HEK293 (cell line): ENCODE measurements at regions of chr5 and their contacts with region 1.

Region 1: DNA sequence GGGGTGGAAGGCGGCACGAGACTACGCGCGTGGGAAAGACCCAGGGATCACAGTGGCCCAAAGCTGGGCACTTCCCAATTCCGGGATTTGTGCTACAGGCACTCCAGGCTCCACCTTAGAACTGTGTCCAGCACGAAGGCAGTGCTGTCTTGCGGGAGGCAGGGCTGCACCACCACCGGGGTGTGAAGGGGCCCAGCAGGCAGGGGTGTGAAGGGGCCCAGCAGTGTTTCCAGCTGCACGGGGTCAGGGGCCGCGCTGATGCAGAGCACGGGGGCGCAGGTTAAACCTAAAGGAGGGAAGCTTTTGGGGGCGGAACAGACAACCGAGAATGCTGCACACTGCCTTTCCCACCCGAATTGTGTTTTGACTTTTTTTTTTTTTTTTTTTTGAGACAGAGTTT is 1.1 kb upstream of the PDCD6 start:
- H3K4me3 ChIP-seq: no peak overlapping the region
- H3K27ac ChIP-seq: peak overlapping the region; percentile 77
- H3K4me1 ChIP-seq: no peaks in the 10 kb centered on the region
- CTCF ChIP-seq: no peak

Region 2: DNA sequence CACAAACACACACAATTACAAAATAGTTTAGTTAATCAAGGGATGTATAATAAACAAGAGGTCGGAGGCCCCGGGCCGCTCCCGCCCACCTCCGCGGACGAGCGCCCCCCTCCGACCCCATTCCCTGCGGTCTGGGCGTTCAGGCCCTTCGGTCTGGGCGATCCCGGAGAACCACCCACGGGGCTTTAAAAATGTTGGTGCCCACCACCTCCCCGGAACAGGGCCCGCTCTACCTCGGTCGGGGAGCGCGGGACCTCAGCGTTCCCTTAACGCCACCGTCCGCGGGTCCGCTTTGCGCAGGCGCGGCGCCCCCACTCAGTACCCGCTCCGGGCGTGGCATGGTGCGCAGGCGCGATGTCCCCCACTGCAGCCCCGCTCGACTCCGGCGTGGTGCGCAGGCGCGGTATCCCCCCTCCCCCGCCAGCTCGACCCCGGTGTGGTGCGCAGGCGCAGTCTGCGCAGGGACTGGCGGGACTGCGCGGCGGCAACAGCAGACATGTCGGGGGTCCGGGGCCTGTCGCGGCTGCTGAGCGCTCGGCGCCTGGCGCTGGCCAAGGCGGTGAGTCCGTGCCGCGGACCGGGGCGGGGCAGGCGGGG is 52.4 kb before region 1 on chr5 and contains the starts of genes CCDC127 and SDHA:
- CTCF ChIA-PET with region 1: interaction called, 3 read pairs
- POLR2A ChIA-PET with region 1: interaction called, 24 read pairs
- H3K4me3 ChIP-seq: peak within 1 kb of the TSS; percentile 99
- H3K27ac ChIP-seq: peak within 1 kb of the TSS; percentile 77; the same call in 1 of the 2 replicates
- H3K4me1 ChIP-seq: peaks cover 4% of the 10 kb centered on the region
- CTCF ChIP-seq: peak; percentile 76

Region 3: DNA sequence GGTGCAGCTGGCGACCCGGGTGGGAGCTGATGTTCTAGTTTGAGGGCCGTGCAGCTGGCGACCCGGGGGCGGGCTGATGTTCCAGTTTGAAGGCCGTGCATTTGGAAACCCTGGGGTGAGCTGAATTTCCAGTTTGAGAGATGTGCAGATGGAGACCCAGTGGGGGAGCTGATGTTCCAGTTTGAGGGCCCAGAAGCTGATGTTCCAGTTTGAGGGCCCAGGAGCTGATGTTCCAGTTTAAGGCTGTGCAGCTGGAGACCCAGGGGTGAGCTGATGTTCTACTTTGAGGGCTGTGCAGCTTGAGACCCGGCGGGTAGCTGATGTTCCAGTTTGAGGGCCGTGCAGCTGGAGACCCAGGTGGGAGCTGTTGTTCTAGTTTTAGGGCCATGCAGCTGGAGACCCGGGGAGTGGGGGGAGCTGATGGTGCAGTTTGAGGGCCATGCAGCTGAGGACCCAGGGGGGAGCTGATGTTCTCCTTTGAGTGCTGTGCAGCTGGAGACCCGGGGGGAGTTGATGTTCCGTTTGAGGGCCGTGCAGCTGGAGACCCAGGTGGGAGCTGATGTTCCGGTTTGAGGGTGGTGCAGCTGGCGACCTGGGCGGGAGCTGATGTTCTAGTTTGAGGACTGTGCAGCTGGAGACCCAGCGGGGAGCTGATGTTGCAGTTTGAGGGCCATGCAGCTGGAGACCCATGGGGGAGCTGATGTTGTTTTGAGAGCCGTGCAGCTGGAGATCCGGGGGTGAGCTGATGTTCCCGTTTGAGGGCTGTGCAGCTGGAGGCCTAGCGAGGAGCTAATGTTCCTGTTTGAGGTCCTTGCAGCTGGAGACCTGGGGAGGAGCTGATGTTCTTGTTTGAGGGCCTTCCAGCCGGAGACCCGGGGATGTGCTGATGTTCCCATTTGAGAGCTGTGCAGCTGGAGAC is 15.6 kb after region 1 on chr5:
- CTCF ChIA-PET with region 1: no interaction called
- POLR2A ChIA-PET with region 1: interaction called, 47 read pairs
- H3K4me3 ChIP-seq: no peak overlapping the region
- H3K27ac ChIP-seq: no peak overlapping the region
- H3K4me1 ChIP-seq: no peaks in the 10 kb centered on the region
- CTCF ChIP-seq: no peak

Region 4: DNA sequence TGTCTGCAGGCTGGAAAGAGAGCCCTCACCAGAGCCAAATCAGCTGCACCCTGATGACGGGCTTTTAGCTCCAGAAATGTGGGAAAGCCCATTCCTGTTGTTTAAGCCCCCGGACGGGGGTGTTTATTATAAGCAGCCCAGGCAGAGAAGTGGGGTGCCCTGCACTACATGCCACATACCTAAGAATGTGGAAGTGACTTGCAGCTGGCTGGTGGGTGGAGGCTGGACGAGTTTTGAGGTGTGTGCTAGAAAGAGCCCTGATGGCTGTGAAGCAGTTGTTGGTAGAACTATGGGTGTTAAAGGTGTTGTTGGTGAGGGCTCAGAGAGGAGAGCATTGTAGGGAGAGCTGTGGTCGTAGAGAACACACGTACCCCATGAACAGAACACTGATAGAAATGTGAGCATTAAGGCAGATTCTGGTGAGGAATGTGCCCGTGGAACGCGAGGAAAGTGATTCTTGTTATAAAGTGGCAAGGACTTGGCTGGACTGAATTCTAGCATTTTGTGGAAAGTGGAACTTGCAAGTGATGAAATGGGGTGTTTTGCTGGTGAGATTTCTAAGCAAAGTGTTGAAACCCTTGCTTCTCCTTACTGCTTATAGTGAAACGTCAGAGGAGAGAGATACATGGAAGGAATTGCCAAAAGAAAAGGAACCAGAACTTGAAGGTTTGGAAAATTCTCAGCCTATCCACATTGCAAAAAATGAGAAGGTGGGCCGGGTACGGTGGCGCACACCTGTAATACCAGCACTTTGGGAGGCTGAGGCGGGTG is 90.1 kb after region 1 on chr5:
- CTCF ChIA-PET with region 1: no interaction called
- POLR2A ChIA-PET with region 1: no interaction called
- H3K4me3 ChIP-seq: no peak overlapping the region
- H3K27ac ChIP-seq: no peak overlapping the region
- H3K4me1 ChIP-seq: no peaks in the 10 kb centered on the region
- CTCF ChIP-seq: no peak